Activated T-helper 1 cell treated with anti-CD3 and anti-CD28 coated beads, Interleukin-12 subunit alpha, Interleukin-12 subunit beta, Interleukin-2, Interleukin-4 antibody, amounts not matched to agents 30 ng/mL and 10 ng/mL and 1 ng/mL, durations not matched to agents 14 hours and 24 hours and 36 hours (primary cell): ENCODE measurements at regions of chr9 and their contacts with region 1.

Region 1: DNA sequence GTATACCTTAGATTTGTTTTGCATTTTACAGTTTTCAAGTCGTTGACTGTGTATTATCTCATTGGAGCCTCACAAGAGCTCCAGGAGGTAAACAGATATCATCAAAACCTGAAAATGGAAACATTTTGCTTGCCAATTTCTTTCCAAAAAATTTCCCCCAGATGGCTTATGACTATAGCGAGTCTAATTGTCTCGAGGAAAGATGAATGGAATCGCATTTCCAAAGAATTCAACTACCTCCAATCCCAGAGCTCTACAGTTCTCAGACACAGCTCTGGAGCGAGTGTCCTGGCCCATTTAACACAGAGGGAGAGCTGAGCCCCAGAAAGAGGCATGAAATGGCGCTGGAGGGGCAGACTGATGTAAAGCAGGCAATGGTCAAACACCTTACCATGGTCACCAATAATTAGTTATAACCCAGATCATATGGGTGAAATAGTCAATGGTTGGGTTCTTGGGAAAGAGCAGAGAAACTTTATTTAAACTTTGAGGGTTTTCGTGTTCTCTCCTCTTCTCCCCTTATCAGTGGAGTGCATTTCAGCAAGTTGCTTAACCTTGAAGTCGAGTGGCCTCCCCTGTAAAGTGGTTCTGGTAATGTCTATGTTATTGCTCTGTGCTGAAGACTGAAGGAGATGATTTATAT is 168.2 kb downstream of the ZDHHC21 start:
- DNase-seq: no peak
- H3K4me3 Mint-ChIP-seq: no peak overlapping the region
- H3K27ac Mint-ChIP-seq: no peak overlapping the region
- H3K4me1 Mint-ChIP-seq: no peaks in the 10 kb centered on the region
- H3K27me3 Mint-ChIP-seq: peaks cover 3% of the 10 kb centered on the region

Region 2: GRCh38 chr9:14585730-14586473 is 60.9 kb after region 1 on chr9:
- intact Hi-C with region 1: loop called (anchors 10 kb)
- DNase-seq: peak; percentile 40
- H3K4me3 Mint-ChIP-seq: no peak overlapping the region
- H3K27ac Mint-ChIP-seq: no peak overlapping the region
- H3K4me1 Mint-ChIP-seq: peaks cover 13% of the 10 kb centered on the region
- H3K27me3 Mint-ChIP-seq: peaks cover under 1% of the 10 kb centered on the region